Activated B cell treated with CpG ODN at 0.5 μM for 24 hours (primary cell): ENCODE measurements at regions of chr18 and their contacts with region 1.

Region 1: GRCh38 chr18:58661423-58661822 is 9.8 kb upstream of the MALT1 start:
- DNase-seq: no peak
- ATAC-seq: no peak
- H3K4me3 Mint-ChIP-seq: no peak overlapping the region
- H3K27ac Mint-ChIP-seq: peak overlapping the region; percentile 69
- H3K4me1 Mint-ChIP-seq: peaks cover 90% of the 10 kb centered on the region
- H3K27me3 Mint-ChIP-seq: no peaks in the 10 kb centered on the region
- CTCF ChIP-seq: no peak

Region 2: GRCh38 chr18:57630002-57630753 is 1031.2 kb before region 1 on chr18:
- CTCF ChIA-PET with region 1: no interaction called
- POLR2A ChIA-PET with region 1: no interaction called
- intact Hi-C with region 1: loop called (anchors 2 kb)
- DNase-seq: peak; percentile 90
- ATAC-seq: peak; percentile 91
- H3K4me3 Mint-ChIP-seq: peak overlapping the region; percentile 98
- H3K27ac Mint-ChIP-seq: peak overlapping the region; percentile 99
- H3K4me1 Mint-ChIP-seq: peaks cover 26% of the 10 kb centered on the region
- H3K27me3 Mint-ChIP-seq: no peaks in the 10 kb centered on the region
- CTCF ChIP-seq: no peak

Region 3: DNA sequence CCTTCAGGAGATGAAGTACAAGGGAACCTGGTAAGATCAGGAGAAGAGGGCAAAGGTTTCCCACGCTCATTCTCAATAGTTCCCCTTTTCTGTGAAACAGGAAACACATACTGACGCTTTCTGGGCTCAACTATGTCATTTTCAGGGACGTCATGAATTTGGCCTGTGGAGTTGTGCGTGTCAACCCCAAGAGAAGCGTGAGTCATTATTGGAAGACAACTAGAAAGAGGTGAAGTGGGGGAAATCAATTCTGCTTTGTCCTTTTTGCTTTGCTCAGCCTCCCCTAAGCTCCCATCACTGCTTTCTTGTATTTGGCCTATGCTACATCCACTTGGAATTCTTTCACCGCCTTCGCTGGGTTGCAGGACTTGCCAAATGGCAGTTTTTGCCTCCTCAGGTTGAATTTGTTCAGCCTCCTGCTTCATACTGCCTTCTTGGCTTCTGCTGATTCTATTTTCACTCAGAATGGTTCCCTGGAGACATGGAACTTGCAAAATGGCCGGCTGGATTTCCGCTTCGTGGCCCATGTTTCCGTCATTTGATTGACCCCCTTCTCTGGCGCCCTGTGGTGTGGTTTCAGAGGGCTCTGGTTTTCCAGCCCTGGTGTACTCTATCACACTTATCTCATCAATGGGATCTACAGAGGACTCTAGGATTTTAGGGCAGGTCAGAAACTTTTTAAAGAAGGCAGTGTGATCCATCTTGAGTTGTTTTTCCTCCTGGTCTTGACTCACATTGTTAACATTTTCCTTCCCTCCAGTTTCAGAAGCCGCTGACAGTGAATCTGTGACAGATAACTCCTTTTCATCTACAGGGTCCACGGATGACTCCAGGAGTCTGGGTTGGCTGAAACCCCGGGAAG is 125.9 kb before region 1 on chr18:
- CTCF ChIA-PET with region 1: interaction called, 16 read pairs
- POLR2A ChIA-PET with region 1: interaction called, 29 read pairs
- intact Hi-C with region 1: loop called (anchors 1 kb)
- DNase-seq: no peak
- ATAC-seq: peak; percentile 78
- H3K4me3 Mint-ChIP-seq: peak overlapping the region; percentile 63
- H3K27ac Mint-ChIP-seq: peak overlapping the region; percentile 81
- H3K4me1 Mint-ChIP-seq: peaks cover 68% of the 10 kb centered on the region
- H3K27me3 Mint-ChIP-seq: no peaks in the 10 kb centered on the region
- CTCF ChIP-seq: no peak

Region 4: GRCh38 chr18:58552057-58552461 is 109.4 kb before region 1 on chr18:
- CTCF ChIA-PET with region 1: interaction called, 3 read pairs
- POLR2A ChIA-PET with region 1: interaction called, 6 read pairs
- intact Hi-C with region 1: loop called (anchors 2 kb)
- DNase-seq: no peak
- ATAC-seq: peak; percentile 84
- H3K4me3 Mint-ChIP-seq: peak overlapping the region; percentile 45
- H3K27ac Mint-ChIP-seq: peak overlapping the region; percentile 84
- H3K4me1 Mint-ChIP-seq: peaks cover 54% of the 10 kb centered on the region
- H3K27me3 Mint-ChIP-seq: no peaks in the 10 kb centered on the region
- CTCF ChIP-seq: no peak

Region 5: GRCh38 chr18:58605027-58606020 is 56.1 kb before region 1 on chr18:
- CTCF ChIA-PET with region 1: no interaction called
- POLR2A ChIA-PET with region 1: interaction called, 13 read pairs
- intact Hi-C with region 1: loop called (anchors 1 kb)
- DNase-seq: no peak
- ATAC-seq: peak; percentile 51
- H3K4me3 Mint-ChIP-seq: no peak overlapping the region
- H3K27ac Mint-ChIP-seq: no peak overlapping the region
- H3K4me1 Mint-ChIP-seq: peaks cover 31% of the 10 kb centered on the region
- H3K27me3 Mint-ChIP-seq: no peaks in the 10 kb centered on the region
- CTCF ChIP-seq: no peak

Region 6: GRCh38 chr18:58649966-58650816 is 11.2 kb before region 1 on chr18:
- CTCF ChIA-PET with region 1: no interaction called
- POLR2A ChIA-PET with region 1: interaction called, 20 read pairs
- intact Hi-C with region 1: loop called (anchors 1 kb)
- DNase-seq: no peak
- ATAC-seq: peak; percentile 93
- H3K4me3 Mint-ChIP-seq: peak overlapping the region; percentile 24
- H3K27ac Mint-ChIP-seq: peak overlapping the region; percentile 74
- H3K4me1 Mint-ChIP-seq: peaks cover 69% of the 10 kb centered on the region
- H3K27me3 Mint-ChIP-seq: no peaks in the 10 kb centered on the region
- CTCF ChIP-seq: no peak

Region 7: GRCh38 chr18:58768293-58768974 is 107.0 kb after region 1 on chr18:
- CTCF ChIA-PET with region 1: interaction called, 13 read pairs
- POLR2A ChIA-PET with region 1: interaction called, 8 read pairs
- intact Hi-C with region 1: no loop called
- DNase-seq: peak; percentile 58
- ATAC-seq: peak; percentile 83
- H3K4me3 Mint-ChIP-seq: peak overlapping the region; percentile 58
- H3K27ac Mint-ChIP-seq: no peak overlapping the region
- H3K4me1 Mint-ChIP-seq: peaks cover 7% of the 10 kb centered on the region
- H3K27me3 Mint-ChIP-seq: peaks cover 12% of the 10 kb centered on the region
- CTCF ChIP-seq: peak; percentile 18